A549 (cell line): ENCODE measurements at regions of chr3 and their contacts with region 1.

Region 1: DNA sequence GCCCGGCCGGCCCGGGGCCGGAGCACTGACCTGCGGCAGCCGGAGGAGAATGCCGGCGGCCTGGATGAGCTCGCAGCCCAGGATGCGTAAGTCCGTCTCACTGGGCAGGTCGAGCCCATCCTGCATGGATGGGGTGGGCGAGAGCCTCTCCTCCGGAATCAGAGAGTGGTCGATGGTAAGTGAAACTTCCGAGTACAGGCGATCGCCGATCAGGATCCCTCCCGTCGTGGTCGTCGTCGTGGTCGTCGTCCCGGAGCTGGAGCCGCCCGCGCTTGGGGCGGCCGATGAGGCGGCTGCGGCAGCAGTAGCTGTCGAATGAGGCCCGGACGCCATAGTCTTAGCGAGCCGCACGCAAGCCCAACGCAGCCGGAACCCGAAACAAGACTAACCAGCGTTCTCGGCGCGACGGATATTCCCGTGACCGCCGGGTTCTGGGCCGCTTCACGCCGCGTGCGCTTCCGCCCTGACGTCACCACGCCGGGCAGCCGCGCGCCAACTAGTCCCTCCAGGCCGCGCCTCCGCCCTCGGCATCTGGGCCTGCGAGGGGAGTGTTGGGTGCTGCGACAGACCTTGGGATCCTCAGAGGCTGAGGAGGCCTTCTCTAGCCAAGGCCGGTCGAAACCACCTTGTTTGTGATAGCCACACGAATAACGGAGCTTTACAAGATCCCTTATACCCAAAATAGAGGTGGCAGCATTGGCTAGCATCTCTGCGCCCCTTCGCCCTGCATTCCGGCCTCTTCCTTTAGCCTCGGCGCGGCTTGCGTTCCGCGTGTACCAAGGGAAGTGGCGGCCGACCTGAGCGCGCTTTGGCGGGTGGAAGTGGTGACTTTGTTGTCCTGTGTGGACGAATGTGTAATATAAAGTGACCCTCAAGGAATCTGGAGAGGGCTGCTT is at the start of gene CCNL1:
- DNase-seq: peak; percentile 83 to 99
- ATAC-seq: peak; percentile 92 to 93
- H3K4me3 ChIP-seq: peak within 1 kb of the TSS; percentile 96
- H3K27ac ChIP-seq: peak within 1 kb of the TSS; percentile 98 to 99
- H3K4me1 ChIP-seq: peaks cover 40% of the 10 kb centered on the region
- CTCF ChIP-seq: no peak
- EP300 ChIP-seq: no peak
- POLR2A ChIP-seq: peak; percentile 95
- RAD21 ChIP-seq: no peak
- polyA plus RNA-seq, gene CCNL1: 130 and 170 TPM in 2 replicates

Region 2: GRCh38 chr3:157148196-157148889 is 11.7 kb before region 1 on chr3:
- CTCF ChIA-PET with region 1: interaction called, 3 read pairs
- POLR2A ChIA-PET with region 1: interaction called, 12 read pairs
- DNase-seq: no peak
- ATAC-seq: no peak; a peak in 1 of 6 replicates
- H3K4me3 ChIP-seq: no peak overlapping the region
- H3K27ac ChIP-seq: no peak overlapping the region
- H3K4me1 ChIP-seq: no peaks in the 10 kb centered on the region; the same call in 2 of the 3 replicates
- CTCF ChIP-seq: no peak
- EP300 ChIP-seq: no peak
- POLR2A ChIP-seq: no peak
- RAD21 ChIP-seq: no peak

Region 3: GRCh38 chr3:157174649-157175498 is 14.9 kb after region 1 on chr3:
- CTCF ChIA-PET with region 1: interaction called, 17 read pairs
- POLR2A ChIA-PET with region 1: interaction called, 306 read pairs
- DNase-seq: peak; percentile 94 to 100
- ATAC-seq: peak; percentile 93 to 96
- H3K4me3 ChIP-seq: peak overlapping the region; percentile 77
- H3K27ac ChIP-seq: peak overlapping the region; percentile 97 to 98
- H3K4me1 ChIP-seq: peaks cover 7% of the 10 kb centered on the region; the same call in 2 of the 3 replicates
- CTCF ChIP-seq: no peak
- EP300 ChIP-seq: peak in 1 of 2 experiments; percentile 51; a peak in 1 of 5 replicates
- POLR2A ChIP-seq: peak; percentile 92
- RAD21 ChIP-seq: no peak